ENCODE measurements at regions of chr10 and their contacts with region 1.

Region 1: GRCh38 chr10:61987951-61988379 is 86.5 kb downstream of the ARID5B start:
- DNase-seq: peak; percentile 30
- H3K4me3 Mint-ChIP-seq: peak overlapping the region; percentile 66
- H3K27ac Mint-ChIP-seq: peak overlapping the region; percentile 98
- H3K4me1 Mint-ChIP-seq: peaks cover 82% of the 10 kb centered on the region
- H3K27me3 Mint-ChIP-seq: no peaks in the 10 kb centered on the region

Region 2: GRCh38 chr10:61842755-61843497 is 145.0 kb before region 1 on chr10:
- CTCF ChIA-PET with region 1: no interaction called
- POLR2A ChIA-PET with region 1: no interaction called
- DNase-seq: no peak
- H3K4me3 Mint-ChIP-seq: no peak overlapping the region
- H3K27ac Mint-ChIP-seq: no peak overlapping the region
- H3K4me1 Mint-ChIP-seq: peaks cover 14% of the 10 kb centered on the region
- H3K27me3 Mint-ChIP-seq: no peaks in the 10 kb centered on the region

Region 3: GRCh38 chr10:61937631-61938351 is 50.2 kb before region 1 on chr10:
- CTCF ChIA-PET with region 1: interaction called, 10 read pairs
- POLR2A ChIA-PET with region 1: interaction called, 24 read pairs
- DNase-seq: no peak
- H3K4me3 Mint-ChIP-seq: peak overlapping the region; percentile 37
- H3K27ac Mint-ChIP-seq: peak overlapping the region; percentile 64
- H3K4me1 Mint-ChIP-seq: peaks cover 86% of the 10 kb centered on the region
- H3K27me3 Mint-ChIP-seq: no peaks in the 10 kb centered on the region

Region 4: GRCh38 chr10:61943674-61944410 is 44.1 kb before region 1 on chr10:
- CTCF ChIA-PET with region 1: interaction called, 10 read pairs
- POLR2A ChIA-PET with region 1: interaction called, 24 read pairs
- DNase-seq: no peak
- H3K4me3 Mint-ChIP-seq: peak overlapping the region; percentile 68
- H3K27ac Mint-ChIP-seq: peak overlapping the region; percentile 87
- H3K4me1 Mint-ChIP-seq: peaks cover 56% of the 10 kb centered on the region
- H3K27me3 Mint-ChIP-seq: no peaks in the 10 kb centered on the region

Region 5: GRCh38 chr10:61961278-61961677 is 26.7 kb before region 1 on chr10:
- CTCF ChIA-PET with region 1: interaction called, 8 read pairs
- POLR2A ChIA-PET with region 1: interaction called, 36 read pairs
- DNase-seq: peak; percentile 59
- H3K4me3 Mint-ChIP-seq: peak overlapping the region; percentile 39
- H3K27ac Mint-ChIP-seq: peak overlapping the region; percentile 90
- H3K4me1 Mint-ChIP-seq: peaks cover 81% of the 10 kb centered on the region
- H3K27me3 Mint-ChIP-seq: no peaks in the 10 kb centered on the region

Region 6: GRCh38 chr10:61974601-61975390 is 13.2 kb before region 1 on chr10:
- CTCF ChIA-PET with region 1: interaction called, 3 read pairs
- POLR2A ChIA-PET with region 1: interaction called, 11 read pairs
- DNase-seq: no peak
- H3K4me3 Mint-ChIP-seq: no peak overlapping the region
- H3K27ac Mint-ChIP-seq: no peak overlapping the region
- H3K4me1 Mint-ChIP-seq: peaks cover 44% of the 10 kb centered on the region
- H3K27me3 Mint-ChIP-seq: no peaks in the 10 kb centered on the region

Region 7: GRCh38 chr10:62019013-62019684 is 31.2 kb after region 1 on chr10:
- CTCF ChIA-PET with region 1: no interaction called
- POLR2A ChIA-PET with region 1: interaction called, 28 read pairs
- DNase-seq: no peak
- H3K4me3 Mint-ChIP-seq: no peak overlapping the region
- H3K27ac Mint-ChIP-seq: peak overlapping the region; percentile 71
- H3K4me1 Mint-ChIP-seq: peaks cover 77% of the 10 kb centered on the region
- H3K27me3 Mint-ChIP-seq: no peaks in the 10 kb centered on the region

Region 8: GRCh38 chr10:62214364-62214874 is 226.5 kb after region 1 on chr10:
- CTCF ChIA-PET with region 1: no interaction called
- POLR2A ChIA-PET with region 1: no interaction called
- DNase-seq: no peak
- H3K4me3 Mint-ChIP-seq: no peak overlapping the region
- H3K27ac Mint-ChIP-seq: no peak overlapping the region
- H3K4me1 Mint-ChIP-seq: no peaks in the 10 kb centered on the region
- H3K27me3 Mint-ChIP-seq: no peaks in the 10 kb centered on the region